PC-9 (cell line): ENCODE measurements at regions of chr3 and their contacts with region 1.

Region 1: DNA sequence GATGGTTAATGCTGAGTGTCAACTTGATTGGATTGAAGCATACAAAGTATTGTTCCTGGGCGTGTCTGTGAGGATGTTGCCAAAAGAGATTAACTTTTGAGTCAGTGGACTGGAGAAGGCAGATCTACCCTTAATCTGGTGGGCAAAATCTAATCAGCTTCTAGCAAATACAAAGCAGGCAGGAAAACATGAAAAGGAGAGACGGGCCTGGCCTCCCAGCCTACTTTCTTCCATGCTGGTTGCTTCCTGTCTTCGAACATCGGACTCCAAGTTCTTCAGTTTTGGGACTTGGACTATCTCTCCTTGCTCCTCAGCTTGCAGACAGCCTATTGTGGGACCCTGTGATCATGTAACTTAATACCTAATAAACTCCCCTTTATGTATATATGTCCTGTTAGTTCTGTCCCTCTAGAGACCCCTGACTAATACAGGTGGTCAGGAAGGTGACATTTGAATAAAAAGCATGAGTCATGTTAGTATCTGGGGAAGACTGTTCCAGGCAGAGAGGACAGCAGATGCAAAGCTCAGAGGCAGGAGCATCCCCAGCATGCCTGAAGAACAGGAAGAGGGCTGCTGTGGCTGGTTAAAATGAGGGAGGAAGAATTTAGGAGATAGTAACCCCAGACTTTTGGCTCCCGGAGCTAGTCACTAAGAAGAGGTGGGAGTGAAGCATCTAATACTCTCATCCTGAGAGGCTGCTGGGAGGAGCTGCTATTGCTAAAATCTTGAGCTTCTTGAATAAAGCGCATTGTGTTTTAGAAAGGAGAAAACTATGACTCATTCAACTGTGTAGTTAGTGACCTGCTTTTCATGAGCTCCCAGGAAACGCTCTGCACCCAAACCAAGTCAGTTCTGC is 207.4 kb upstream of the HES1 start:
- DNase-seq: peak; percentile 42 to 88
- H3K4me3 ChIP-seq: no peak overlapping the region
- H3K27ac ChIP-seq: peak overlapping the region; percentile 54
- H3K4me1 ChIP-seq: peaks cover 28% of the 10 kb centered on the region
- H3K27me3 ChIP-seq: no peaks in the 10 kb centered on the region
- CTCF ChIP-seq: no peak

Region 2: GRCh38 chr3:193883551-193883950 is 45.0 kb before region 1 on chr3:
- CTCF ChIA-PET with region 1: no interaction called
- POLR2A ChIA-PET with region 1: no interaction called
- intact Hi-C with region 1: no loop called
- DNase-seq: peak; percentile 58 to 85
- H3K4me3 ChIP-seq: no peak overlapping the region
- H3K27ac ChIP-seq: peak overlapping the region; percentile 81
- H3K4me1 ChIP-seq: peaks cover 88% of the 10 kb centered on the region
- H3K27me3 ChIP-seq: no peaks in the 10 kb centered on the region
- CTCF ChIP-seq: no peak

Region 3: GRCh38 chr3:193940552-193940951 is 12.0 kb after region 1 on chr3:
- CTCF ChIA-PET with region 1: interaction called, 3 read pairs
- POLR2A ChIA-PET with region 1: interaction called, 11 read pairs
- intact Hi-C with region 1: no loop called
- DNase-seq: no peak
- H3K4me3 ChIP-seq: no peak overlapping the region
- H3K27ac ChIP-seq: no peak overlapping the region
- H3K4me1 ChIP-seq: no peaks in the 10 kb centered on the region; the same call in 1 of the 2 replicates
- H3K27me3 ChIP-seq: no peaks in the 10 kb centered on the region
- CTCF ChIP-seq: no peak